Activated T-helper 1 cell treated with anti-CD3 and anti-CD28 coated beads, Interleukin-12 subunit alpha, Interleukin-12 subunit beta, Interleukin-2, Interleukin-4 antibody, amounts not matched to agents 30 ng/mL and 10 ng/mL and 1 ng/mL, durations not matched to agents 14 hours and 24 hours and 36 hours (primary cell): ENCODE measurements at regions of chr14 and their contacts with region 1.

Region 1: GRCh38 chr14:61252369-61253063 is 28.6 kb downstream of the TMEM30B start:
- DNase-seq: peak; percentile 49
- H3K4me3 Mint-ChIP-seq: no peak overlapping the region
- H3K27ac Mint-ChIP-seq: no peak overlapping the region
- H3K4me1 Mint-ChIP-seq: peaks cover 24% of the 10 kb centered on the region
- H3K27me3 Mint-ChIP-seq: peaks cover 24% of the 10 kb centered on the region

Region 2: DNA sequence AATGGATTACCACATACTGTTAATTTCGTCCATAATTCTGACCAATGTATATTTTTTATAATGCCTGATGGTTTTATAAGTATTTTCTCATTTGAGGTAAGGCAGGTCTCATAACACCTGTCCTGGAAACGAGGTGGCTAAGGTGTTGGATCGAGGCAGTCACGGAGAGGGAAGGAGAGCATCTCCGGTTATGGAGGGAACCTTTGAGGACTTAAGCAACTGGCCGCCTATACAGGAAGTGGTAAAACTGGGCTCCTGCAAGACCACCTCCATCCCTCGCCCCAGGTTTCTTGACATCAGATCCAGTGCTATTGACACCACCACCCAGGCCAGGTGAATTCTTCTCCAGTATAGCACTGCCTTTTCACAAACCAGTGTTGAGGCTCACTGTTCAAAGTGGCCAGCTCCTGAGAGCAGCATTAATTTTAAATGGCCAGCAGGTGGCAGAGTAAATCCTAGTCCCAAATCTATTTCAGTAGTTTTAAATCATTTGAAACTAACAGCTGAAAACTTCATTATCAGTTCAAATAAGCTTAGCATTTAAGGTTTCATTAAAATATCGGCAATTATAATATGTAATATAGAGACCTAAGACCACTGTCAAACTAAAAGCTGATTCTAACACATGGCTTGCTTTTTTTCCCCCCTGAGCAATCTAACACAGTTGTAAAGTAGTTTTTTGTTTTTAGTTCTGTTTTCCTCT is 902.7 kb before region 1 on chr14:
- intact Hi-C with region 1: loop called (anchors 1 kb)
- DNase-seq: no peak
- H3K4me3 Mint-ChIP-seq: no peak overlapping the region
- H3K27ac Mint-ChIP-seq: no peak overlapping the region
- H3K4me1 Mint-ChIP-seq: no peaks in the 10 kb centered on the region
- H3K27me3 Mint-ChIP-seq: peaks cover 23% of the 10 kb centered on the region

Region 3: DNA sequence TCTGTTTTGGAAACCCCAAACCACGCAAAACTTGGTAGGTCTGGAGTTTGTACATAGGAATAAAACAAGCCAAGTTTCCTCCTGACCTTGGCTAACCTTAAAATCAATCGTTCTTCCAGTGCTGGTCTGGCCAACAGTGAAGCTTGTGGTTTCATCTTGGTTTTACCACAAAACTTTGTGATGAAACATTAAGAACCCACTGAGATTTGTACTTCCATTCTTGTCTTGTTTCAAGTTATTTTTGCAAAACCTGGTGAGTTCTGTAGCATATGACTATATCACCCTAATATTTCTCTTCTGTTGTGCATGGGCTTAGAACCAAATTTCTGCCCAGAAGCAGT is 629.6 kb before region 1 on chr14:
- intact Hi-C with region 1: loop called (anchors 1 kb)
- DNase-seq: no peak
- H3K4me3 Mint-ChIP-seq: no peak overlapping the region
- H3K27ac Mint-ChIP-seq: no peak overlapping the region
- H3K4me1 Mint-ChIP-seq: no peaks in the 10 kb centered on the region
- H3K27me3 Mint-ChIP-seq: peaks cover 19% of the 10 kb centered on the region

Region 4: DNA sequence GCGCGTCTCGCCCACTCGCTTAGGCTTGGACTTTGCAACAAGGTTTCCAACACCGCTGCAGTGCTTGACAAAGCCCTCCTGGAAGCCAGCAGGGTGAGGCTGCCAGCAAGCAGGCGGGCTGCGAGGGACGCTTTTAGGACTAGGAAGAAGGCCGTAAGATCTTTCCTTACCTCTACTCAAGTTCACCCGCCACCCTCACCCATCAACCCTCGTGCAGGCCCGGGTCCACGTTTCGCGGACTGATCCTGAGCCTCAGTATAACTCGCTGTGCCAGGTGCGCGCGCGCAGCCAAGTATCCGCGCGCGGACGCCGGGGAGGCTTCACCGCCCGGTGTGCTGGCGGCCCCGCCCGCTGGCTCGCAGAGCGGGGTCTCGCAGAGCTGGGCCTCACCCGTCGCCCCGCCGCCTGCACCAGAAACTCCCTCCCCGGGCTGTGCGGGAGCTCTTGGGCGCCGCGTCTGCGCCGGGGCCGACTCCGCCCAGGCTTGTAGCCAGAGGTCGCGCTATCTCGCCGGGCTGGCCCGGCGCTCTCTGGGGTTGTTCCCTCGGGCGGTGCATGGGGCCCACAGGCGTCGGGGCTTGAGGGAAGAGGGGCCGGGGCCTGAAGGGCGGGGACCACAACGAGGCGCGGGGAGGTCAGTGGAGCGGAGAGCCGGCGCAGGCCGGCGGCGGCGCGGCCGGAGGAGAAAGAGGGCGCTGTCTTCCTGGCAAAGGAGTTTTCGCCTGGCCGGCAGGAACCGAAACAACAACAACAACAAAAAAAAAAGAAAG is 595.6 kb before region 1 on chr14:
- intact Hi-C with region 1: loop called (anchors 1 kb)
- DNase-seq: peak; percentile 24
- H3K4me3 Mint-ChIP-seq: peak overlapping the region; percentile 82
- H3K27ac Mint-ChIP-seq: no peak overlapping the region
- H3K4me1 Mint-ChIP-seq: peaks cover 48% of the 10 kb centered on the region
- H3K27me3 Mint-ChIP-seq: peaks cover 79% of the 10 kb centered on the region

Region 5: GRCh38 chr14:60724137-60724619 is 528.3 kb before region 1 on chr14 and contains the start of gene SIX4:
- intact Hi-C with region 1: loop called (anchors 10 kb)
- DNase-seq: no peak
- H3K4me3 Mint-ChIP-seq: peak within 1 kb of the TSS; percentile 91
- H3K27ac Mint-ChIP-seq: peak within 1 kb of the TSS; percentile 67
- H3K4me1 Mint-ChIP-seq: peaks cover 25% of the 10 kb centered on the region
- H3K27me3 Mint-ChIP-seq: peaks cover 75% of the 10 kb centered on the region
- total RNA-seq, gene SIX4: 0.57 and 1.1 TPM in 2 replicates

Region 6: GRCh38 chr14:61178226-61179060 is 74.1 kb before region 1 on chr14:
- intact Hi-C with region 1: loop called (anchors 5 kb)
- DNase-seq: peak; percentile 27
- H3K4me3 Mint-ChIP-seq: peak overlapping the region; percentile 47
- H3K27ac Mint-ChIP-seq: peak overlapping the region; percentile 78
- H3K4me1 Mint-ChIP-seq: peaks cover 44% of the 10 kb centered on the region
- H3K27me3 Mint-ChIP-seq: peaks cover 2% of the 10 kb centered on the region